ENCODE measurements at regions of chr18 and their contacts with region 1.

Region 1: DNA sequence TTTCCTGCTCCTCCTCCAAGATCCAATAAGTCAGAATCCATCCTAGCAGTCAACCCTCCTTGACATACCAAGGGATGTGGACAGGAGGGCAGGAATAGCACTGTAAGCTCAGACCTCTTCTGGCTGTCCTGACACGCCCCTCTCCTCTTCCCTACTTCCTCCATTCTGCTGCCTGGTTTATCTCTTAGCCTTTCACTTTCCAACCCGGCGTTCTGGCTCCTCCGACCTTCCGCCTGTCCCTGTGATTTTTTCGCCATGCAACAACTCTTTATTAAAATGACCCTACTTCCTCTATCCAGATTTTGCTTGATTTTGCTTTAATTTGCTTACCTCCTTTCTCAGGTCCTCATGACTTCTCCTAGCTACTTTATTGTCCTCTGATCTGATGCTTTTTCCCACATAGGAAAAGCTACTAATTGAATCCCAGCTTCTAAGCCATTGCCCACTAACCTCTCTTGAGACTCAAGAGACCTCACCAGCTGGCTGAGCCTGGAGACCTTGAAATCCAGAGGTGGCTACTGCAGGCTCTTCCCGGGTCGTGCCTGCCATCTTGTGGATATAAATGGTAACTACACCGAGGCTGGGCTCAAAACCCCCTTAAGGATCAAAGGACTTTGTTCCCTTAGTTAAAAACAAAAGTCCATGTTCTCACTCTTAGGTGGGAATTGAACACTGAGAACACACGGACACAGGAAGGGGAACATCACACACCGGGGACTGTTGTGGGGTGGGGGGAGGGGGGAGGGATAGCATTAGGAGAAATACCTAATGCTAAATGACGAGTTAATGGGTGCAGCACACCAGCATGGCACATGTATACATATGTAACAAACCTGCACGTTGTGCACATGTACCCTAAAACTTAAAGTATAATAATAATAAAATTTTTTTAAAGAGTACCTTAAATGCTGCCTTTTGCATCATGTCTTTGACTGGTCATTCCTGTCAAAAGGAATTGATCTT is 139.4 kb downstream of the AKAIN1 start:
- DNase-seq: peak; percentile 25 to 46 (median 45)
- H3K4me3 ChIP-seq: peak overlapping the region in 2 of 3 experiments; percentile 7 to 51
- H3K4me3 Mint-ChIP-seq: peak overlapping the region; percentile 64 to 75
- H3K27ac ChIP-seq: no peak overlapping the region
- H3K27ac Mint-ChIP-seq: peak overlapping the region in 3 of 7 donors; percentile 32 to 70 (median 65)
- H3K4me1 ChIP-seq: peaks cover 24 to 25% of the 10 kb centered on the region in 2 donors
- H3K4me1 Mint-ChIP-seq: peaks cover 22% of the 10 kb centered on the region
- H3K27me3 ChIP-seq: no peaks in the 10 kb centered on the region
- H3K27me3 Mint-ChIP-seq: peaks cover 0 to 3% (median 0%) of the 10 kb centered on the region in 3 donors
- CTCF ChIP-seq: peak; percentile 75

Region 2: GRCh38 chr18:4106407-4107033 is 951.1 kb before region 1 on chr18:
- intact Hi-C with region 1: loop called (anchors 5 kb)
- DNase-seq: peak; percentile 2 to 22 (median 12)
- H3K4me3 ChIP-seq: no peak overlapping the region
- H3K4me3 Mint-ChIP-seq: no peak overlapping the region
- H3K27ac ChIP-seq: no peak overlapping the region
- H3K27ac Mint-ChIP-seq: no peak overlapping the region
- H3K4me1 ChIP-seq: no peaks in the 10 kb centered on the region
- H3K4me1 Mint-ChIP-seq: no peaks in the 10 kb centered on the region
- H3K27me3 ChIP-seq: no peaks in the 10 kb centered on the region
- H3K27me3 Mint-ChIP-seq: peaks cover 0 to 6% (median 3%) of the 10 kb centered on the region in 3 donors
- CTCF ChIP-seq: peak; percentile 86